ENCODE measurements at regions of chr3 and their contacts with region 1.

Region 1: GRCh38 chr3:111539351-111540331 is 2.4 kb upstream of the CD96 start:
- DNase-seq: peak; percentile 89
- ATAC-seq: peak; percentile 81
- H3K4me3 ChIP-seq: peak overlapping the region; percentile 49
- H3K27ac ChIP-seq: peak overlapping the region; percentile 82
- H3K4me1 ChIP-seq: peaks cover 32% of the 10 kb centered on the region
- H3K27me3 ChIP-seq: no peaks in the 10 kb centered on the region
- CTCF ChIP-seq: peak; percentile 99

Region 2: GRCh38 chr3:110314512-110315114 is 1225.0 kb before region 1 on chr3:
- CTCF ChIA-PET with region 1: no interaction called
- POLR2A ChIA-PET with region 1: no interaction called
- intact Hi-C with region 1: loop called (anchors 10 kb)
- DNase-seq: peak; percentile 88
- ATAC-seq: peak; percentile 80
- H3K4me3 ChIP-seq: no peak overlapping the region
- H3K27ac ChIP-seq: no peak overlapping the region
- H3K4me1 ChIP-seq: peaks cover 10% of the 10 kb centered on the region
- H3K27me3 ChIP-seq: no peaks in the 10 kb centered on the region
- CTCF ChIP-seq: peak; percentile 90

Region 3: GRCh38 chr3:110984858-110985257 is 554.8 kb before region 1 on chr3:
- CTCF ChIA-PET with region 1: no interaction called
- POLR2A ChIA-PET with region 1: no interaction called
- intact Hi-C with region 1: no loop called
- DNase-seq: peak; percentile 47
- ATAC-seq: no peak
- H3K4me3 ChIP-seq: no peak overlapping the region
- H3K27ac ChIP-seq: no peak overlapping the region
- H3K4me1 ChIP-seq: no peaks in the 10 kb centered on the region
- H3K27me3 ChIP-seq: no peaks in the 10 kb centered on the region
- CTCF ChIP-seq: no peak

Region 4: GRCh38 chr3:111012388-111013248 is 527.0 kb before region 1 on chr3:
- CTCF ChIA-PET with region 1: no interaction called
- POLR2A ChIA-PET with region 1: no interaction called
- intact Hi-C with region 1: loop called (anchors 5 kb)
- DNase-seq: peak; percentile 60
- ATAC-seq: peak; percentile 98
- H3K4me3 ChIP-seq: no peak overlapping the region
- H3K27ac ChIP-seq: no peak overlapping the region
- H3K4me1 ChIP-seq: no peaks in the 10 kb centered on the region
- H3K27me3 ChIP-seq: no peaks in the 10 kb centered on the region
- CTCF ChIP-seq: peak; percentile 66

Region 5: GRCh38 chr3:111151438-111151837 is 388.2 kb before region 1 on chr3:
- CTCF ChIA-PET with region 1: no interaction called
- POLR2A ChIA-PET with region 1: no interaction called
- intact Hi-C with region 1: loop called (anchors 2 kb)
- DNase-seq: peak; percentile 94
- ATAC-seq: peak; percentile 100
- H3K4me3 ChIP-seq: 0 out of 2 replicates have a peak overlapping the region, but pooled peaks have one; percentile 21
- H3K27ac ChIP-seq: no peak overlapping the region
- H3K4me1 ChIP-seq: peaks cover 18% of the 10 kb centered on the region
- H3K27me3 ChIP-seq: no peaks in the 10 kb centered on the region
- CTCF ChIP-seq: no peak; the same call in 1 of the 2 replicates

Region 6: GRCh38 chr3:111194048-111194447 is 345.6 kb before region 1 on chr3:
- CTCF ChIA-PET with region 1: no interaction called
- POLR2A ChIA-PET with region 1: no interaction called
- intact Hi-C with region 1: no loop called
- DNase-seq: no peak
- ATAC-seq: no peak
- H3K4me3 ChIP-seq: no peak overlapping the region
- H3K27ac ChIP-seq: no peak overlapping the region
- H3K4me1 ChIP-seq: no peaks in the 10 kb centered on the region
- H3K27me3 ChIP-seq: no peaks in the 10 kb centered on the region
- CTCF ChIP-seq: no peak

Region 7: DNA sequence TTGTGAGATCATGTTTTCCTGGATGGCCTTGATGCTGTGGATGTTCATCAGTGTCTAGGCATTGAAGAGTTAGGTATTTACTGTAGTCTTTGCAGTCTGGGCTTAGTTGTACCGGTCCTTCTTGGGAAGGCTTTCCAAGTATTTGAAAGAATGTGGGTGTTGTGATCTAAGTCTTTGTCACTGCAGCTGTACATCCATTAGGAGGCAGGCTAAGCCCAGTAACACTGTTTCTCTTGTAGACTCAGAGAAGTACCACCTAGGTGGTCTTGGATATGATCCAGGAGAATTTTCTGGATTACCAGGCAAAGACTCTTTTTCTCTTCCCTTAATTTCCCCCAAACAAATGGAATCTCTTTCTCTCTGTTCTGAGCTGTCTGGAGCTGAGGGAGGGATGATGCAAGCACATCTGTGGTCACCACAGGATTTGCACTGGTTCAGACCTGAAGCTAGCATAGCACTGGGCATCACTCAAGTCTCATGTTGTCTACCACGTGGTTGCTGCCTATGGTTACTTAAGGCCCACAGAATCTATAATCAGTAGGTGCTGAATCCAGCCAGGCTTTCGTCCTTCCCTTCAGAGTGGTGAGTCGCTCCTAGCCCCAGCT is 240.5 kb before region 1 on chr3:
- CTCF ChIA-PET with region 1: no interaction called
- POLR2A ChIA-PET with region 1: interaction called, 3 read pairs
- intact Hi-C with region 1: loop called (anchors 1 kb)
- DNase-seq: no peak
- ATAC-seq: peak; percentile 36
- H3K4me3 ChIP-seq: no peak overlapping the region
- H3K27ac ChIP-seq: no peak overlapping the region
- H3K4me1 ChIP-seq: no peaks in the 10 kb centered on the region
- H3K27me3 ChIP-seq: no peaks in the 10 kb centered on the region
- CTCF ChIP-seq: peak; percentile 42; the same call in 1 of the 2 replicates

Region 8: DNA sequence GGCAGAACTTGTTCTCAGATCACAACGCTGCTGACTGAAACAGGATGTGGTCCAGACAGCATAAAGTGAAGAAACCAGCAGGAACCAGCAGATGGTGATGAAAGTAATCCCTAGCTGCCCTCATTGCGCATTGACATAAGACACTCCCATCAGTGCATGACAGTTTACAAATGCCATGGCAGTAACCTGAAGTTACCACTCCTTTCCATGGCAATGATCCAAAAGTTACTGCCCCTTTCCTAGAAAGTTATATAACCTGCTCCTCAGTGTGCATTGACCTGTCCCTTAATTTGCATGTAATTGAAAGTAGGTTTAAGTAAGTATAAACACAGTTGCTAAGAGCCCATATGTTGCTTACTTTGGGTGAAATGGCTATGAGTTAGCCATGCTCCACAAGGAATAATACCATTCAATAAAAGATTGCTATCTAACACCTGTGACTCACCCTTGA is 146.7 kb before region 1 on chr3:
- CTCF ChIA-PET with region 1: no interaction called
- POLR2A ChIA-PET with region 1: no interaction called
- intact Hi-C with region 1: loop called (anchors 5 kb)
- DNase-seq: peak; percentile 55
- ATAC-seq: peak; percentile 80
- H3K4me3 ChIP-seq: no peak overlapping the region
- H3K27ac ChIP-seq: no peak overlapping the region
- H3K4me1 ChIP-seq: no peaks in the 10 kb centered on the region
- H3K27me3 ChIP-seq: no peaks in the 10 kb centered on the region
- CTCF ChIP-seq: no peak